HepG2 (cell line): ENCODE measurements at regions of chr4 and their contacts with region 1.

Region 1: GRCh38 chr4:184250795-184251669 is 33.4 kb upstream of the ENPP6 start:
- DNase-seq: peak; percentile 71
- ATAC-seq: peak; percentile 85
- H3K4me3 ChIP-seq: no peak overlapping the region
- H3K27ac ChIP-seq: no peak overlapping the region
- H3K4me1 ChIP-seq: no peaks in the 10 kb centered on the region
- H3K27me3 ChIP-seq: 0 out of 5 replicates have a peak, but pooled peaks cover 0 to 4% of the 10 kb centered on the region in 2 experiments
- CTCF ChIP-seq: peak; percentile 65
- EP300 ChIP-seq: no peak
- POLR2A ChIP-seq: no peak
- RAD21 ChIP-seq: no peak

Region 2: GRCh38 chr4:183840311-183840710 is 410.7 kb before region 1 on chr4:
- CTCF ChIA-PET with region 1: no interaction called
- POLR2A ChIA-PET with region 1: no interaction called
- in situ Hi-C with region 1: no loop called
- intact Hi-C with region 1: loop called (anchors 2 kb)
- DNase-seq: peak; percentile 60
- ATAC-seq: peak; percentile 85
- H3K4me3 ChIP-seq: no peak overlapping the region
- H3K27ac ChIP-seq: no peak overlapping the region
- H3K4me1 ChIP-seq: no peaks in the 10 kb centered on the region
- H3K27me3 ChIP-seq: no peaks in the 10 kb centered on the region
- CTCF ChIP-seq: peak; percentile 91
- EP300 ChIP-seq: no peak
- POLR2A ChIP-seq: no peak
- RAD21 ChIP-seq: peak; percentile 82

Region 3: DNA sequence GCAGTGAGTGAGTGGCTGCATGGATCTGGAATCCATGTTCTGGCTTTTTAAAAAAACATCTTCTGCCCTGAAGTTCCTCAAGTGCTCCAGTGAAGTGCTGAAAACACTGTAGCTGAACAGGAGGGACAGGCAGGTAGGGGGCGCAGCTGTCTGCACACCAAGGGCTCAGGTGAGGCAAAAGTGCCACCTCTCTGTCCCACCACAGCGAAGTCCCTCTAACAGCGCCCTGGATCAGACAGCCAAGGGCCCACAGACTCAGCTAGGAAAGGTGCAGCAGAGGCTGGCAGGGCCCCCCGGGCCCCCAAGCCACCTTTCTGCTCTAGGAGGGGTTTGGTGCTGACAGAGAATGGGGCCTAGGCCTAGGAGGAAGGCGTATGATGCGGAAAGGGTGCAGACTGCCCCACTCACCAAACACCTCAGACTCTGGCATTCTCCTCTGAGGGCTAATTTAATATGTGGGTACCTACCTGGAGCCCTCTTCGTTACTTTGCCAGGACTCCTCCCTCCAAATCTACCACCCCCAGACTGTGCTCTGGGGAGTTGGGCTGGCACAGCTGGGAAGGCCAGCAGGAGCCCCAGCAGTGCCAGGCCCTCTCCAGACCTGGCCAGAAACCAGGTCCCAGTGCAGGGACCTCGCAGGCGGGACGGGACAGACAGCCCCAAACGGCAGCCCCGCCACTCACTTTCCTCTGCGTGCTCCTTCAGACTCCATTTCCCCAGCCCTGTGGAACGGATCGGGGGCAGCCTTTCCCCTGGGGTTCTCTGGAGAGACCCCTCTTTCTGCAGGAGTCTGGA is 107.1 kb before region 1 on chr4:
- CTCF ChIA-PET with region 1: no interaction called
- POLR2A ChIA-PET with region 1: no interaction called
- in situ Hi-C with region 1: no loop called
- intact Hi-C with region 1: no loop called
- DNase-seq: no peak
- ATAC-seq: peak; percentile 83
- H3K4me3 ChIP-seq: no peak overlapping the region
- H3K27ac ChIP-seq: no peak overlapping the region
- H3K4me1 ChIP-seq: peaks cover 9% of the 10 kb centered on the region
- H3K27me3 ChIP-seq: peaks cover 1 to 9% of the 10 kb centered on the region in 2 experiments; a peak in 1 of 5 replicates
- CTCF ChIP-seq: peak; percentile 40
- EP300 ChIP-seq: no peak
- POLR2A ChIP-seq: no peak
- RAD21 ChIP-seq: no peak

Region 4: DNA sequence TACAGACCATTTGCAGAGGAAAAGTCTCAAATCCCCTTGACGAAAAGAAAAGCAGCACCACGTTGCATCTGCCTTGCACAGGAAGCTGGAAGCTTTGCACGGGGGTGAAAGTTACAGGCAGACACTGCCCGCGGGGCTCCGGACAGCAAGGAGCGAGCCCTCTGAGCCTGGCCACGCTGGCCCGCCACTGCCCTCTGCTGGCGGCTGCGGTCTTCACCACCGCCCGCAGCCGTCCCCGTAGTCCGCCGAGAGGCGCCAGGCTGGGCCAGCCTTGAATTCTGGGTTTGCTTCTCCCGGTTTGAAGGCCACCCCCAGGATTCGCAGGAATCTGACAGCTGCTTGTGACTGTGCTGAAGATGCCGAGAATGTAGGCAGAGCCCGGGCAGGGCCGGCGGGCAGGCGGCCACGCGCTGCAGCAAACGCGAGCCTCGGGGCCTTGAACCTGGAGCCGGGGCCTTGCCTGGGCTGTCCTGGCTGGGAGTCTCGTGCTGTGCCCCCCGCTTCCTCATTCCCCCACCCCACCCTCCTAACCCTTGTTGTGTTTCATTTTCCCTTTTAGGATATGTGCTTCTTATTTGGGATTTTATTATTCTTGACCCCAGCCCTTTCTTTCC is 82.5 kb before region 1 on chr4:
- CTCF ChIA-PET with region 1: interaction called, 3 read pairs
- POLR2A ChIA-PET with region 1: no interaction called
- in situ Hi-C with region 1: no loop called
- intact Hi-C with region 1: loop called (anchors 1 kb)
- DNase-seq: peak; percentile 26
- ATAC-seq: peak; percentile 98
- H3K4me3 ChIP-seq: no peak overlapping the region
- H3K27ac ChIP-seq: no peak overlapping the region
- H3K4me1 ChIP-seq: no peaks in the 10 kb centered on the region
- H3K27me3 ChIP-seq: peaks cover 0 to 8% of the 10 kb centered on the region in 2 experiments; a peak in 2 of 5 replicates
- CTCF ChIP-seq: peak; percentile 95
- EP300 ChIP-seq: no peak
- POLR2A ChIP-seq: no peak
- RAD21 ChIP-seq: peak; percentile 96